ENCODE measurements at regions of chr7 and their contacts with region 1.

Region 1: GRCh38 chr7:80453699-80454340 is 58.0 kb downstream of the GNAT3 start:
- DNase-seq: no peak
- H3K4me3 ChIP-seq: no peak overlapping the region
- H3K27ac ChIP-seq: no peak overlapping the region
- H3K4me1 ChIP-seq: no peaks in the 10 kb centered on the region
- H3K27me3 ChIP-seq: no peaks in the 10 kb centered on the region
- CTCF ChIP-seq: peak in 2 of 3 experiments; percentile 38 to 49

Region 2: GRCh38 chr7:80060218-80060806 is 393.5 kb before region 1 on chr7:
- intact Hi-C with region 1: loop called (anchors 5 kb)
- DNase-seq: no peak
- H3K4me3 ChIP-seq: no peak overlapping the region
- H3K27ac ChIP-seq: no peak overlapping the region
- H3K4me1 ChIP-seq: no peaks in the 10 kb centered on the region
- H3K27me3 ChIP-seq: no peaks in the 10 kb centered on the region
- CTCF ChIP-seq: peak in 2 of 3 experiments; percentile 33 to 49

Region 3: GRCh38 chr7:80095545-80095944 is 358.3 kb before region 1 on chr7:
- intact Hi-C with region 1: loop called (anchors 10 kb)
- DNase-seq: no peak
- H3K4me3 ChIP-seq: no peak overlapping the region
- H3K27ac ChIP-seq: no peak overlapping the region
- H3K4me1 ChIP-seq: no peaks in the 10 kb centered on the region
- H3K27me3 ChIP-seq: no peaks in the 10 kb centered on the region
- CTCF ChIP-seq: peak in 2 of 3 experiments; percentile 34 to 52